GM23248 (cell line): ENCODE measurements at regions of chr6 and their contacts with region 1.

Region 1: DNA sequence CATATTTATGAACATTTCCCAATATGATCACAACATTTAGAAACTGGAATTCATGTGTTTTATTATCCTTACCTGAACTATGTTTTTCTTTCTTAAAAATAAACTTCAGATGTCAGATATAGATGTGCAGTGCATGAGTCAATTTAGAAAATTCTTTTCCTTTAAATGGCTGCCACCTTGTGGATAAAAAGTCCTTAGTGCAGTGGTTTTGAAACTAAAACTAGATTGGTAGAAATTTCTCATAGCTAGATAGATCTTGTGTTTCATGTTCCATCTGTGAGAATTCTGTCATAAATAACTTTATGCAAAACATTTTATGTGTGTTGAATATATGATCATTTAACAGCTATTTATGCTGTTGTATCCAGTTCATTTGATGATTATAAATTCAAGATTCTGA is 134.9 kb downstream of the KLHL32 start:
- DNase-seq: peak; percentile 70
- H3K4me3 ChIP-seq: no peak overlapping the region
- H3K27ac ChIP-seq: no peak overlapping the region
- H3K4me1 ChIP-seq: no peaks in the 10 kb centered on the region
- H3K27me3 ChIP-seq: peaks cover 19% of the 10 kb centered on the region

Region 2: DNA sequence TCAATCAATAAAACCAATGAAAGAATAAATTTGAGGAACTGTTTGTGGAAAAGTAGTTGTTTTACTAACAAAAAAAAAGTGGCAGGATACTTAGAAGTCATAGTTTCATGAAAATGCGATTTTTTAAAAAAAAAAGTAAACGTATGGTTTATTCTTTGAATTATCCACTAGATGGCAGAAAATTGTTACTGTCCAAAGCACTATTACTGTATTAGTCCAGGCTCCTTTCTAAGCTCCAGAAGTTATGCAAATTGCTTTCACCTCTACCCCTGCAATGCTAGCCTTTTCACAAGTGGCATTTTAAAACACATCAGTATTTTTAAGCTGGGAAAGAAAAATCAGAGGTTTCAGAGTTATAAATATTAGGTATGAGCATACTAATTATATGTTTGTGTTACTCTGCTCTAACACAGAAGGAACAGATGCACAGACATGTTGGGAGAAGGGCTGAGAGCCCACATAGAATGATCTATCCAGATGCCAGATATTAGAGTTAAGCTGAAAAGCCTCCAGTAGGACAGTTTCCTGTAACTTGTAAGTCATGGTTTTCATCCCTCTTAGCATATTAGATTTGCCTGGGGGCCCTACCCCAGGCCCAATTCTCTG is 432.6 kb before region 1 on chr6:
- in situ Hi-C with region 1: loop called (anchors 10 kb)
- DNase-seq: peak; percentile 63
- H3K4me3 ChIP-seq: no peak overlapping the region
- H3K27ac ChIP-seq: no peak overlapping the region
- H3K4me1 ChIP-seq: no peaks in the 10 kb centered on the region
- H3K27me3 ChIP-seq: 0 out of 2 replicates have a peak, but pooled peaks cover 6% of the 10 kb centered on the region

Region 3: GRCh38 chr6:96900873-96901272 is 158.6 kb before region 1 on chr6:
- in situ Hi-C with region 1: loop called (anchors 5 kb)
- DNase-seq: no peak
- H3K4me3 ChIP-seq: no peak overlapping the region
- H3K27ac ChIP-seq: no peak overlapping the region
- H3K4me1 ChIP-seq: peaks cover 16% of the 10 kb centered on the region
- H3K27me3 ChIP-seq: peaks cover 10% of the 10 kb centered on the region; the same call in 1 of the 2 replicates